H1 (cell line): ENCODE measurements at regions of chr1 and their contacts with region 1.

Region 1: DNA sequence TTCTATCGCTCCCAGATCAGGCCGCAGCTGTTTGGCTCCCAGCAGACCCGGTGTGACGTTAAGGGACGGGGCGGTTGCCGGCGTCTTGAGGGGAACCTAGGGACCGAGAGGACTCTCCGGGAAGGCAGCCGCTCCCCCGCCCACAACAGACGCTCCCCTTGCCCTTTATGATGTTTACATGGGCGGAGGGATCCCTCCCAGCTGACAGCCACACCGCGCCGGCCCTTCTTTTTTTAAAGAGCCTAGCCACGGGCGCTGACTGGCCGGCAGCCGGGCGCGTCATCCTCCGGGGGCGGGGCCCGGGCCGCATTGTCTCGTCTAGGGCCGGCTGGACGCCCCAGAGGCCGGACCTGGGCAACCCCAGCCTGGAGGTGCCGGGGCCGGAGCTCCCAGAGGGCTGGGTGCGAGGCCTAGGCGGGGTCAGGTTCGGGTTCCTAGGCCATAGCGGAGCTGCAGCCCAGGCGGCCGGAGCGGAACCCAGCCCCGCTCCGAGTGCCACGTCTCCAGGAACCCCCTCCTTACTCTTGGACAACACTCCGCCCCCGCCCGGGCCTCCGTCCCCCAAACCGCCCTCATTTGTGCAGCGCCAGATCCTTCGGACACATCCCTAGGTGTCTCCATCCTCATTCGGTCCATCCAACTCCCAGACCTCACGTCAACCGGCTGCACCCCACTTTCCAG is at the start of gene PCAT6:
- DNase-seq: peak; percentile 93 to 96
- H3K4me3 ChIP-seq: peak within 1 kb of the TSS; percentile 74 to 93 (median 84)
- H3K27ac ChIP-seq: peak within 1 kb of the TSS; percentile 67
- H3K4me1 ChIP-seq: peaks cover 12 to 22% (median 16%) of the 10 kb centered on the region in 4 experiments
- H3K27me3 ChIP-seq: peaks cover 0 to 5% (median 2%) of the 10 kb centered on the region in 4 experiments; a peak in 2 of 7 replicates
- CTCF ChIP-seq: no peak
- EP300 ChIP-seq: peak in 1 of 2 experiments; percentile 68; a peak in 1 of 3 replicates
- POLR2A ChIP-seq: peak; percentile 73 to 98
- RAD21 ChIP-seq: no peak; a peak in 1 of 4 replicates
- total RNA-seq, gene PCAT6: 4.6 and 6.4 TPM in 2 replicates

Region 2: GRCh38 chr1:202365092-202365815 is 445.5 kb before region 1 on chr1:
- CTCF ChIA-PET with region 1: no interaction called
- POLR2A ChIA-PET with region 1: no interaction called
- DNase-seq: no peak
- H3K4me3 ChIP-seq: no peak overlapping the region
- H3K27ac ChIP-seq: no peak overlapping the region
- H3K4me1 ChIP-seq: peaks cover 2 to 14% (median 11%) of the 10 kb centered on the region in 4 experiments
- H3K27me3 ChIP-seq: no peaks in the 10 kb centered on the region
- CTCF ChIP-seq: no peak
- EP300 ChIP-seq: no peak
- POLR2A ChIP-seq: no peak
- RAD21 ChIP-seq: no peak

Region 3: GRCh38 chr1:202781180-202781579 is 29.6 kb before region 1 on chr1:
- CTCF ChIA-PET with region 1: no interaction called
- POLR2A ChIA-PET with region 1: interaction called, 12 read pairs
- DNase-seq: no peak
- H3K4me3 ChIP-seq: no peak overlapping the region
- H3K27ac ChIP-seq: no peak overlapping the region
- H3K4me1 ChIP-seq: no peaks in the 10 kb centered on the region
- H3K27me3 ChIP-seq: no peaks in the 10 kb centered on the region
- CTCF ChIP-seq: no peak
- EP300 ChIP-seq: no peak
- POLR2A ChIP-seq: no peak
- RAD21 ChIP-seq: no peak

Region 4: GRCh38 chr1:202821452-202821851 is 10.7 kb after region 1 on chr1:
- CTCF ChIA-PET with region 1: interaction called, 4 read pairs
- POLR2A ChIA-PET with region 1: interaction called, 47 read pairs
- DNase-seq: no peak
- H3K4me3 ChIP-seq: no peak overlapping the region
- H3K27ac ChIP-seq: no peak overlapping the region
- H3K4me1 ChIP-seq: no peaks in the 10 kb centered on the region
- H3K27me3 ChIP-seq: no peaks in the 10 kb centered on the region
- CTCF ChIP-seq: no peak
- EP300 ChIP-seq: no peak
- POLR2A ChIP-seq: no peak
- RAD21 ChIP-seq: no peak

Region 5: DNA sequence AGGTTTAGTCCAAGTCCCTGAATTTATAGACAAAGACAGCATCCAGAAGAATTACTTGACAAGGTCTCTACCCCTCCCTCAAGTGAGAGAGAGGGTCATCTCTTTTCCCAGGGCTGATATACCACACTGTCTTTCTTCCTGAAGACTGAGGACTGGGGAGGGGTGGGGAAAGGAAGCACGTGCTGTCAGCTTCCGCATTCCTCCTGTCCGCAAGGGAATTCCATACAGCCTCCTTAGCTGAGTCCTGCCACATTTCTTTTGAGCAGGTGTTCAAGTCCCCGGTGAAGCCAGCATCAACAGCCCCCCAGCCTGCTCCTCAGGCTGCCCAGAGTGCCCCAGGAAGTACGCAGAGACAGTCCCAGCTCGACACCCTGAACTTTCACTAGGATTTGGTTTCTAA is 34.2 kb after region 1 on chr1:
- CTCF ChIA-PET with region 1: interaction called, 6 read pairs
- POLR2A ChIA-PET with region 1: interaction called, 14 read pairs
- DNase-seq: no peak
- H3K4me3 ChIP-seq: no peak overlapping the region
- H3K27ac ChIP-seq: no peak overlapping the region
- H3K4me1 ChIP-seq: peaks cover 0 to 5% (median 0%) of the 10 kb centered on the region in 4 experiments; a peak in 1 of 7 replicates
- H3K27me3 ChIP-seq: no peaks in the 10 kb centered on the region
- CTCF ChIP-seq: no peak
- EP300 ChIP-seq: no peak
- POLR2A ChIP-seq: no peak
- RAD21 ChIP-seq: no peak

Region 6: DNA sequence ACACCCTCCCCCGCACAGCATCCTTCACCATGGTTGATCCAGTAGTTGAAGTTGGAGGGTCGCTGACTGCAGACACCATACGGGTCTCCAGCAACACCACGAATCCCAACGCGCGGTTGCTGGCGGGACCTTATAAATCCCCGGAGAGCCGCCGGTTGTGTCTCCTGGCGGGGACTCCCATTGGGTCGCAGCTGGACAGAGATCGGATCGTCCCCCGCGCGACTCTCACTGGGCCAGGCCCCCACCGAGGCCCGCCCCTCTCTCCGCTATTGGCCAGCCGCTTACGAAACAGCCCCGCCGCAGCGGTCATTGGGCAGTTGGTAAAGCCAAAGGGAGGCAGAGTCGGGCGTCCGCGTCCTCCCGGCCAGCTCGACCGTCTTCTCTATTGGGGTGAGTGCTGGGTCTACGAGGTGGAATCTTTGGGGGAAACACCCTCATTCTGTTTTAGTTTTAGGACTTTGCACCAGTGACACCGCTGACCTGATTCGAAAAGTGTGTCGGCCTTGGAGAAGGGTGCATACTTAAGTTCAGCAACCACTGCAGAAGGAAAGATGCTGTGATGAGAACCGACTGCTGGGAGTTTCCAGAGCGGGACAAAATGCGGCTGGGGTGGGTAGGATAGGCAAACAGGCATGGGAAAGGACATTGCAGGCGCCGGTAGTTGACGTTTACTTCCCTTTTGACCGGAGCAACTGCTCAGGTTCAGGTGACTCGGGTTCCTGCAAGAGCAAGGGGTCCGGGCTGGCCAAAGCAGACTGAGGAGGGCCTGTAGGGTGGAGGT is 50.9 kb after region 1 on chr1:
- CTCF ChIA-PET with region 1: interaction called, 6 read pairs
- POLR2A ChIA-PET with region 1: interaction called, 81 read pairs
- DNase-seq: peak; percentile 78 to 92
- H3K4me3 ChIP-seq: peak overlapping the region; percentile 81 to 92 (median 88)
- H3K27ac ChIP-seq: peak overlapping the region; percentile 91; the same call in 1 of the 2 replicates
- H3K4me1 ChIP-seq: peaks cover 0 to 8% (median 3%) of the 10 kb centered on the region in 4 experiments; a peak in 3 of 7 replicates
- H3K27me3 ChIP-seq: no peaks in the 10 kb centered on the region
- CTCF ChIP-seq: no peak
- EP300 ChIP-seq: no peak
- POLR2A ChIP-seq: peak in 1 of 2 experiments; percentile 74; a peak in 2 of 3 replicates
- RAD21 ChIP-seq: no peak; a peak in 1 of 4 replicates

Region 7: GRCh38 chr1:202926720-202927491 is 116.2 kb after region 1 on chr1 and contains the start of gene KLHL12:
- CTCF ChIA-PET with region 1: no interaction called
- POLR2A ChIA-PET with region 1: no interaction called
- DNase-seq: peak; percentile 93 to 96
- H3K4me3 ChIP-seq: peak within 1 kb of the TSS; percentile 52 to 90 (median 87)
- H3K27ac ChIP-seq: peak within 1 kb of the TSS; percentile 90
- H3K4me1 ChIP-seq: no peaks in the 10 kb centered on the region
- H3K27me3 ChIP-seq: no peaks in the 10 kb centered on the region
- CTCF ChIP-seq: peak; percentile 69 to 78 (median 69)
- EP300 ChIP-seq: peak; percentile 44 to 59; a peak in 2 of 3 replicates
- POLR2A ChIP-seq: peak; percentile 82 to 94
- RAD21 ChIP-seq: peak; percentile 41 to 52
- total RNA-seq, gene KLHL12: 29.9 and 33.3 TPM in 2 replicates